HCT116 (cell line): ENCODE measurements at regions of chr14 and their contacts with region 1.

Region 1: DNA sequence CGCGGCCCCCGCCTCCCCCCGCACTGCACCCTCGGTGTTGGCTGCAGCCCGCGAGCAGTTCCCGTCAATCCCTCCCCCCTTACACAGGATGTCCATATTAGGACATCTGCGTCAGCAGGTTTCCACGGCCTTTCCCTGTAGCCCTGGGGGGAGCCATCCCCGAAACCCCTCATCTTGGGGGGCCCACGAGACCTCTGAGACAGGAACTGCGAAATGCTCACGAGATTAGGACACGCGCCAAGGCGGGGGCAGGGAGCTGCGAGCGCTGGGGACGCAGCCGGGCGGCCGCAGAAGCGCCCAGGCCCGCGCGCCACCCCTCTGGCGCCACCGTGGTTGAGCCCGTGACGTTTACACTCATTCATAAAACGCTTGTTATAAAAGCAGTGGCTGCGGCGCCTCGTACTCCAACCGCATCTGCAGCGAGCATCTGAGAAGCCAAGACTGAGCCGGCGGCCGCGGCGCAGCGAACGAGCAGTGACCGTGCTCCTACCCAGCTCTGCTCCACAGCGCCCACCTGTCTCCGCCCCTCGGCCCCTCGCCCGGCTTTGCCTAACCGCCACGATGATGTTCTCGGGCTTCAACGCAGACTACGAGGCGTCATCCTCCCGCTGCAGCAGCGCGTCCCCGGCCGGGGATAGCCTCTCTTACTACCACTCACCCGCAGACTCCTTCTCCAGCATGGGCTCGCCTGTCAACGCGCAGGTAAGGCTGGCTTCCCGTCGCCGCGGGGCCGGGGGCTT is at the start of gene FOS:
- DNase-seq: peak; percentile 92
- ATAC-seq: peak; percentile 83
- H3K4me3 ChIP-seq: peak within 1 kb of the TSS; percentile 95 to 97
- H3K27ac ChIP-seq: peak within 1 kb of the TSS; percentile 70
- H3K4me1 ChIP-seq: peaks cover 10 to 39% of the 10 kb centered on the region in 2 experiments
- H3K27me3 ChIP-seq: no peaks in the 10 kb centered on the region
- CTCF ChIP-seq: no peak
- POLR2A ChIP-seq: peak; percentile 98
- RAD21 ChIP-seq: no peak
- total RNA-seq, gene FOS: 50.4 TPM

Region 2: DNA sequence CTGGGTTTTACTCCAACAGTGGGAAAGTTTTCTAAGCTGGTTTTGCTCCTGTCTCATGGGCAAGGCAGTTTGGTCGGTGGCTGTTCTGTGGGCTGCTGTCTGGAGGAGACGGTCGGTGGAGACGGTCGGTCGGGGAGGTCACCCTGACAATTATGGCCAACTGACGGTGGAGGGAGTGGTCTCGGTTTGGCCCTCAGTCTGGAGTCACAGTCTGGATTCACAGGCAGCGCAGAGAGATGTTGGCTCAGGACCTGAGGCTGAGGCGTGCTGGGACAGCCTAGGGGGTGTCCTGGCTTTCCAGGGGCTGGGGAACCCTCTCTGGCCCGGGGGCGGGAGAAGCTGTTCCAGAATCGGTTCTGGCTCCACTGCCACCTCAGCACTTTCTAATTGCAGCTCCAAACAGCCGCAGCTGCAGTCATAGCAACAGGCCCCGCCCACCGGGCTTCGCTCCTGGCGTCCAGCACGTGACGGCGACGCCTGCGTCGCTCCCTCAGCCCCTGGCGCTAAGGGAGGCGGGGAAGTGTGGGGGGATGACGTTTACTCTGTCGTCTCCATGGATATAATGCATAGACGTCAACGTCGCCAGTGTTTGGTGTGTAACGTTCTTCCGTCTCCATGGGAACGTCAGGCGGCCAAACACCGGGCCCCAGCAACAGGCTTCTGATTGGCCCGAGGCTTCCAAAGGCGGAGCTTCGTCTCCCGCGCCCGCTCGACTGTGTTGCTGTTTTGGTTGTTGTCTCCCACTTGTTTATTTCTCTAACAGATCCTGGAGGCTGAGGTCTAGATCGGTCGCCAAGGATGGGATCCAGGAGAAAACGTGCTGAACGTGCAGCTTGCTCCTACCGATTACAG is 19.8 kb before region 1 on chr14:
- CTCF ChIA-PET with region 1: no interaction called
- POLR2A ChIA-PET with region 1: interaction called, 6 read pairs
- RAD21 ChIA-PET with region 1: no interaction called
- intact Hi-C with region 1: loop called (anchors 1 kb)
- DNase-seq: peak; percentile 99
- ATAC-seq: peak; percentile 96
- H3K4me3 ChIP-seq: peak overlapping the region; percentile 37 to 50
- H3K27ac ChIP-seq: peak overlapping the region; percentile 56
- H3K4me1 ChIP-seq: peaks cover 17 to 40% of the 10 kb centered on the region in 2 experiments
- H3K27me3 ChIP-seq: no peaks in the 10 kb centered on the region
- CTCF ChIP-seq: no peak
- POLR2A ChIP-seq: no peak
- RAD21 ChIP-seq: no peak